ENCODE measurements at regions of chr10 and their contacts with region 1.

Region 1: GRCh38 chr10:13973742-13974141 is 357.0 kb downstream of the FRMD4A start:
- DNase-seq: no peak
- H3K4me3 ChIP-seq: no peak overlapping the region
- H3K27ac ChIP-seq: no peak overlapping the region
- H3K4me1 ChIP-seq: no peaks in the 10 kb centered on the region
- H3K27me3 ChIP-seq: no peaks in the 10 kb centered on the region
- CTCF ChIP-seq: no peak

Region 2: GRCh38 chr10:14184841-14185315 is 211.1 kb after region 1 on chr10:
- CTCF ChIA-PET with region 1: no interaction called
- POLR2A ChIA-PET with region 1: interaction called, 11 read pairs
- intact Hi-C with region 1: no loop called
- DNase-seq: peak in 1 of 2 experiments; percentile 62
- H3K4me3 ChIP-seq: peak overlapping the region; percentile 24; the same call in 1 of the 2 replicates
- H3K27ac ChIP-seq: peak overlapping the region; percentile 95
- H3K4me1 ChIP-seq: peaks cover 10% of the 10 kb centered on the region; the same call in 1 of the 2 replicates
- H3K27me3 ChIP-seq: no peaks in the 10 kb centered on the region
- CTCF ChIP-seq: no peak

Measured in PC-9 (cell line).